ENCODE measurements at regions of chr14 and their contacts with region 1.

Region 1: DNA sequence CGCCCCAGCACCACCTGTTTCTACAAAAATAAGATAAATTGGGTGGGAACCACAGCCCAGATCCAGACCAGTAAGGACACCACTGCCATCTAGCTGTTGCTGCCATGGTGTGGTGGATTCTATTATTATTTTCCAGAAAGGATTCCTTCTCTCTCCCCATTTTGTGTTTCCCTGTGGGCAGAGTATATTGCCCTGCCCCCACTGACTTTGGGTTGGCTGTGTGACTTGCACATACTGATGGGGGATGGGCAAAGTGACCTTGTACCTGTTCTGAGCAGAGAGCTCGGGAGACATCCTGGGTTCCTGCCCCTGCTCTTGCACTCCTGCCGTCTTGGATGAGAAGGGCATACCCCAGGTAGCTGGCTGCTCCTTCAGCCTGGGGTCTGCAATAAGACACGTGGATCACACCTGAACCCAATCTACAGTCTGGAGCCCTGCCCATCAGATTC is 24.3 kb downstream of the MOAP1 start:
- DNase-seq: no peak
- ATAC-seq: peak; percentile 48
- H3K4me3 ChIP-seq: no peak overlapping the region
- H3K27ac ChIP-seq: no peak overlapping the region
- H3K4me1 ChIP-seq: no peaks in the 10 kb centered on the region
- H3K27me3 ChIP-seq: no peaks in the 10 kb centered on the region
- CTCF ChIP-seq: peak; percentile 23 to 54 (median 47); a peak in 4 of 6 replicates
- EP300 ChIP-seq: no peak
- POLR2A ChIP-seq: no peak
- RAD21 ChIP-seq: peak; percentile 48

Region 2: GRCh38 chr14:92951912-92952471 is 208.4 kb before region 1 on chr14:
- CTCF ChIA-PET with region 1: interaction called, 9 read pairs
- POLR2A ChIA-PET with region 1: no interaction called
- RAD21 ChIA-PET with region 1: no interaction called
- SMC1A ChIA-PET with region 1: interaction called, 3 read pairs
- in situ Hi-C with region 1: no loop called
- intact Hi-C with region 1: loop called (anchors 1 kb)
- DNase-seq: peak; percentile 37
- ATAC-seq: peak; percentile 100
- H3K4me3 ChIP-seq: no peak overlapping the region
- H3K27ac ChIP-seq: no peak overlapping the region
- H3K4me1 ChIP-seq: no peaks in the 10 kb centered on the region; the same call in 1 of the 2 replicates
- H3K27me3 ChIP-seq: no peaks in the 10 kb centered on the region
- CTCF ChIP-seq: peak; percentile 86 to 97 (median 95); a peak in 5 of 6 replicates
- EP300 ChIP-seq: no peak
- POLR2A ChIP-seq: no peak
- RAD21 ChIP-seq: peak; percentile 94

Region 3: DNA sequence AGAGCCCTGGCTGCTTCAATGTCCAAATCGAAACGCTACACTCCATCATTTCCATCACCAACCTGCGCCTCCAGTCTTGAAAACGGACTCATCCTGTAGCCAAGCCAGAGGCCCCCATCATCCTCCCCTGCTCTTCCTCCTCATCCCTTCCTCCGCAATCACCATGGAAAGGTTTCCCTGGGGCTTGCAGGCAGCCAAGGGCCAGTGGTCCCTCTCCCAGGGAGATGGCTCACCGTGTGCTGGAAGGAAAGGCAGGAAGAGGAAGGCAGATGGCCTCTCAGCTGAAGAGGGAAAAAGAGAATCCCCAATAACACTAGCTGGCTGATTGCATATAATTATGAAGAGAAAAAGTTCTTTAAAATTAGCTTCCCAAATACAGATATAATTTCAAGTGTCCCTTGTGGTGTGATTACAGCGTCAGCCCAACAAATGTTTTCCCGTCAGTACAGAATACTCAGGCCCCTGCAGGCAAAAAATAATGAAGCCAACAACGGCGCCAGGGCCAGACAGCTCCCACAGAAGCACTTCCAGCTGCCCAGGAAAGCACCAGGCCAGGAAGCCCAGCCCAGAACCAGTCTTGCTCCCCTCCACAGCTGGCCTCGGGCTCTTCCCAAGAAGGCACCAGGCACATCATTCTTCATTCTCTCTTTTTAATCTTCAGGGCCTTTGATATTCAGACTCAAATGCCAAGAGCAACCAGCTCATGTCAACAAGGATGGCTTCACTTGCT is 69.4 kb before region 1 on chr14:
- CTCF ChIA-PET with region 1: no interaction called
- POLR2A ChIA-PET with region 1: no interaction called
- RAD21 ChIA-PET with region 1: no interaction called
- SMC1A ChIA-PET with region 1: no interaction called
- in situ Hi-C with region 1: no loop called
- intact Hi-C with region 1: no loop called
- DNase-seq: no peak
- ATAC-seq: no peak
- H3K4me3 ChIP-seq: no peak overlapping the region
- H3K27ac ChIP-seq: no peak overlapping the region
- H3K4me1 ChIP-seq: peaks cover 19% of the 10 kb centered on the region
- H3K27me3 ChIP-seq: no peaks in the 10 kb centered on the region
- CTCF ChIP-seq: no peak
- EP300 ChIP-seq: no peak
- POLR2A ChIP-seq: no peak
- RAD21 ChIP-seq: no peak

Region 4: DNA sequence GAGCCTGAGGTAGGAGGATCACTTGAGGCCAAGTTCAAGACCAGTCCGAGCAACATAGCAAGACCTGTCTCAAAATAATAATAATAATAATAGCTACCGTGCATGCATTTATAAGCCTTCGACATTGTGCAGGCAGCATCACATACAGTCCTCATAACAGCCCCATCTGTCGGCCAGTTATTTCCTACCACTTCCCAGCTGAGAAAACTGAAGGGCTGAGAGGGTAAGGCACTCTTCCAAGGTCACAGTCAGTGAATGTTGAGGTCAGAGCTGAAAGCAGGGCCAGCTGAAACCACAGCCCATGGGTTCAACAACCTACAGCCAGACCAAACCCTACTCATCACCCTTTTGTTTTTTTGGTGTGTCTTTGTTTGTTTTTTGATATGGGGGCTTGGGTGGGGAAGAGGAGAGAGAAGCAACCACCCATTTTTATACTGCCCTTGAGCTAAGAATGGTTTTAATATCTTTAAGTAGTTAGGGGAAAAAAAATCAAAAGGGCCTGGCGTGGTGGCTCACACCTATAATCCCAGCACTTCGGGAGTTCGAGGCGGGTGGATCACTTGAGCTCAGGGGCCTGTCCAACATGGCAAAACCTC is 27.8 kb before region 1 on chr14:
- CTCF ChIA-PET with region 1: interaction called, 20 read pairs
- POLR2A ChIA-PET with region 1: no interaction called
- RAD21 ChIA-PET with region 1: interaction called, 3 read pairs
- SMC1A ChIA-PET with region 1: interaction called, 12 read pairs
- in situ Hi-C with region 1: no loop called
- intact Hi-C with region 1: no loop called
- DNase-seq: no peak
- ATAC-seq: peak; percentile 94
- H3K4me3 ChIP-seq: no peak overlapping the region
- H3K27ac ChIP-seq: no peak overlapping the region
- H3K4me1 ChIP-seq: no peaks in the 10 kb centered on the region
- H3K27me3 ChIP-seq: no peaks in the 10 kb centered on the region
- CTCF ChIP-seq: peak; percentile 51 to 64 (median 62)
- EP300 ChIP-seq: no peak
- POLR2A ChIP-seq: no peak
- RAD21 ChIP-seq: peak; percentile 58

Region 5: DNA sequence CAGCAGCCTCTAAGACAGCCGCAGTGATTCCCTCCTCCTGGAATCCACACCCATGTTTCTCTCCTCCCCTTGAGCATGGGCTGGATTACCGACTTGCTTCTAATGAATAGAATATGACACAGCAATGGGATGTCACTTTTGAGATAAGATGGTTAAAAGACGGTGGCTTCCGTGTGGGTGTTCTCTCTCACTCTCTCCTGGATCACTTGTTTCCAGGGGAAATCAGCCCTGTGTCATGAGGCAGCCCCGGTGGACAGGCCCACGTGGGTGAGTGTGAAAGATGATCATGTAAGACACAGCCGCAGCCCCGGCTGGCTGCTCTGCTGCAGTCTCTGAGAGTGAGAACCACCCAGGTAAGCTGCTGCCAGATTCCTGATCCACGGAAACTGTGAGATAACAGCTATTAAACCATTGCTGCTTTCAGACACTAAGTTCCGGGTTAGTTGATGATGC is 13.6 kb after region 1 on chr14:
- CTCF ChIA-PET with region 1: interaction called, 21 read pairs
- POLR2A ChIA-PET with region 1: no interaction called
- RAD21 ChIA-PET with region 1: interaction called, 5 read pairs
- SMC1A ChIA-PET with region 1: interaction called, 69 read pairs
- in situ Hi-C with region 1: no loop called
- intact Hi-C with region 1: no loop called
- DNase-seq: no peak
- ATAC-seq: peak; percentile 42
- H3K4me3 ChIP-seq: no peak overlapping the region
- H3K27ac ChIP-seq: no peak overlapping the region
- H3K4me1 ChIP-seq: no peaks in the 10 kb centered on the region
- H3K27me3 ChIP-seq: no peaks in the 10 kb centered on the region
- CTCF ChIP-seq: no peak
- EP300 ChIP-seq: no peak
- POLR2A ChIP-seq: no peak
- RAD21 ChIP-seq: no peak

Region 6: DNA sequence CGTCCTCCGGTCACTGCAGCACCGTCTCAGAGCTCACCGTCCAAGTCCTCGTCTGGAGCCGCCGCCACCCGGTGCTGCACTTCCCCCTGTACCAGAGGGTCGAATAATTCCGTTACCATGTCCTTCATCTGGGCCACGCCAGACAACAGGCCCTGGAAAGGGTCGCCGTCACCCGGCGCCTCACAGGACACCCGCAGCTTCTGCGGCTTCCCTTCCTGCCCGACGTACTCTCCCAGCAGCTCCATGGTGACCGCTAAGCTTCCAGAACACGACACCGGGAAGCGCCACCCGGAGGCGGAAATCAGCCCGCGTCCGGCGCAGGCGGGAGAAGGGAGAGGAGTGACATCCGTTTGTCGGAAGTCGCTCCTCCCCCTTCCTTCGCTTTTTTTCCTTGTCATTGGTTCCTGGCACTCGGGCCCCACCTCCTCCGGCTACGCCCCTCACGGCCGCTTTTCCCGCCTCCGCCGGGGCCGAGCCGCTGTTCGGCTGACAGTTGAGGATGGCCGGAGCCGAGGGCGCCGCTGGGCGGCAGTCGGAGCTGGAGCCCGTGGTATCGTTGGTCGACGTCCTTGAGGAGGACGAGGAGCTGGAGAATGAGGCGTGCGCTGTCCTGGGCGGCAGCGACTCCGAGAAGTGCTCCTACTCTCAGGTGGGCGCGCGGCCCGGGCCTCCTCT is 46.6 kb after region 1 on chr14 and contains the starts of genes GON7 and UBR7:
- CTCF ChIA-PET with region 1: interaction called, 6 read pairs
- POLR2A ChIA-PET with region 1: interaction called, 8 read pairs
- RAD21 ChIA-PET with region 1: interaction called, 9 read pairs
- SMC1A ChIA-PET with region 1: no interaction called
- in situ Hi-C with region 1: no loop called
- intact Hi-C with region 1: loop called (anchors 5 kb)
- DNase-seq: peak; percentile 86
- ATAC-seq: peak; percentile 89
- H3K4me3 ChIP-seq: peak within 1 kb of the TSS; percentile 76
- H3K27ac ChIP-seq: peak within 1 kb of the TSS; percentile 86
- H3K4me1 ChIP-seq: peaks cover 15% of the 10 kb centered on the region
- H3K27me3 ChIP-seq: no peaks in the 10 kb centered on the region
- CTCF ChIP-seq: peak in 2 of 3 experiments; percentile 16 to 20; a peak in 2 of 6 replicates
- EP300 ChIP-seq: 0 out of 4 replicates have a peak, but pooled peaks of 1 of the 2 experiments have one; percentile 21
- POLR2A ChIP-seq: peak; percentile 92
- RAD21 ChIP-seq: 0 out of 2 replicates have a peak, but pooled peaks have one; percentile 13
- polyA plus RNA-seq, gene GON7: 25.9 to 31.2 TPM
- polyA plus RNA-seq, gene UBR7: 14.3 to 20.8 TPM